ENCODE measurements at regions of chr9 and their contacts with region 1.

Region 1: DNA sequence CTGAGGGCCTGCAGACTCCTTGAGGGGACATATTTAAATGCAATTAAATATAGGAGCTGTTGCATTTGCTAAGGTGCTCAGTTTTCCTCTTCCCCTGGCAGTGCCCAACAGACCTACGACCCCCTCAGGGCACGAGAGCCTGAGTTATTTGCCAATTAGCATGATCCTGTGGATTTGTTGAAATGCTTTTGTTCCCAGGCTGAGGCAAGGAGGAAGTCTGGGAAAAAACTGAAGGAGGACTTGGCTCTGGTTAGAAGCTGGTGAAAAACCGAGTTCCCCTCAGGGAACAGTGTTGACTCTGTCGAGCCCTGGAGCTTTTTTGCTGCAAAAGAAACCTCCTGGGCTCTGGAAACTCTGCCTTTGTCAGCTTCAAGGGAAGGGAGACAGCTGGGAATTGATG is 103.6 kb upstream of the SHB start:
- DNase-seq: no peak
- ATAC-seq: peak in 3 of 8 donors; percentile 42 to 52 (median 47)
- H3K4me3 ChIP-seq: no peak overlapping the region
- H3K27ac ChIP-seq: peak overlapping the region in 4 of 10 donors; percentile 7 to 49 (median 30)
- H3K4me1 ChIP-seq: peaks cover 0 to 21% (median 11%) of the 10 kb centered on the region in 9 donors
- H3K27me3 ChIP-seq: no peaks in the 10 kb centered on the region
- CTCF ChIP-seq: no peak

Region 2: GRCh38 chr9:37966412-37967271 is 205.9 kb before region 1 on chr9:
- intact Hi-C with region 1: no loop called
- DNase-seq: no peak
- ATAC-seq: no peak
- H3K4me3 ChIP-seq: no peak overlapping the region
- H3K27ac ChIP-seq: no peak overlapping the region
- H3K4me1 ChIP-seq: peaks cover 7 to 63% (median 46%) of the 10 kb centered on the region in 9 donors
- H3K27me3 ChIP-seq: no peaks in the 10 kb centered on the region
- CTCF ChIP-seq: no peak

Region 3: DNA sequence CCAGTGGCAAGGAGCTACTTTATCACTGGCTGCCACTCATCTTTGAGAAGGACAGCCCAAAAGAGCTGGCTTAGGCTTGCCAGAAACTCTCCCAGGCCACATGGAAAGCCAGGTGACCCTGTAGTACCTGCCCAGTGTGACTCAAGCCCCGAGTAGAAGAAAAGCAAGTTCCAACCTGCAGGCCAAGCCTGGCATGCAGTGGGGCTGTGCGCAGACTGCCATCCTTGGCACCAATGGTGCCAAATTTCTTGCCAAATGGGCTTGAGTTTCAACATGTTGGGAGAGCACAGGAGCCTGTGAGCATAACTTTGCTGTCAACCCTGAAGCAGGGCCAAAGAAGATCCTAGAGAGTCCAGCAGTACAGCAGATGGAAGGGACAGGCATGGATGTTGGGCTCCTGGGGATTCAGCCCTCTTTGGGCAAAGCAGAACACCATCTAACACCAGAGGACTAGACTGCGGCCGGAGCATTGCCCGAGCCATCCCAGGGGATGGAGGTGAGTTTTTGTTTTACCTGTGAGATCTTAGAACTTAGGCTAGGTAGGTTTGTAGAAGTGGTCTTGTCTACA is 76.3 kb before region 1 on chr9:
- intact Hi-C with region 1: loop called in 1 of 10 experiments (anchors 5 kb)
- DNase-seq: no peak
- ATAC-seq: no peak
- H3K4me3 ChIP-seq: no peak overlapping the region
- H3K27ac ChIP-seq: no peak overlapping the region
- H3K4me1 ChIP-seq: no peaks in the 10 kb centered on the region
- H3K27me3 ChIP-seq: no peaks in the 10 kb centered on the region
- CTCF ChIP-seq: no peak

Region 4: DNA sequence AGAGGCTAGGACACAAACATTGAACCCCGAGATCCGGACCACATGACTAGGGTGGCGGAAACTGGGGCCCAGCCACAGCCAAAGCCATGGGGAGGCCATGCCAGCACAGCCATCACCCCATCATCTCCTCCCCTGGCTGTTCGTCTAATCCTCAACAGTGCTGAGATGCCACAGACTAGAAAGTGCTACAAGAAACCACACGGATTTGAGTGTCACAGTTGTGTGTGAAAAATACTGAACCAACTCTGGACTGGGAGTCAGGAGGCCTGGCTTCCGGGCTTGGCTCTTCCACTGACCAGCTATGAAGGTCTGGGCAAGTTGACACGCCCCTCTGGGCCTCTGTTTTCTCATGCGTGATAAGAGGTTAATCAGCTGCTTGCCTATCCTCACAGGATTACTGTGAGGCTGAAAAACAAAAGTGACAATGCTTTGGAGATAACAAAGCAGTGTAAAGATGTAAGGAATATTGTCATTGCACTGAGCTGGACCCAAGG is 64.7 kb before region 1 on chr9:
- intact Hi-C with region 1: no loop called
- DNase-seq: no peak
- ATAC-seq: no peak
- H3K4me3 ChIP-seq: no peak overlapping the region
- H3K27ac ChIP-seq: no peak overlapping the region
- H3K4me1 ChIP-seq: peaks cover 0 to 6% (median 0%) of the 10 kb centered on the region in 9 donors
- H3K27me3 ChIP-seq: peaks cover 0 to 8% (median 0%) of the 10 kb centered on the region in 7 donors
- CTCF ChIP-seq: no peak

Measured in heart right ventricle (tissue), 16 donors.